ENCODE measurements at regions of chr9 and their contacts with region 1.

Region 1: GRCh38 chr9:72280913-72281500 is 84.0 kb downstream of the ZFAND5 start:
- DNase-seq: peak; percentile 61 to 76 (median 71)
- ATAC-seq: peak; percentile 92
- H3K4me3 ChIP-seq: no peak overlapping the region
- H3K4me1 ChIP-seq: peaks cover 7% of the 10 kb centered on the region
- CTCF ChIP-seq: peak; percentile 89

Region 2: GRCh38 chr9:72038890-72039410 is 242.1 kb before region 1 on chr9:
- intact Hi-C with region 1: loop called in 1 of 2 experiments (anchors 5 kb)
- DNase-seq: peak in 2 of 3 donors; percentile 84 to 86
- ATAC-seq: peak; percentile 96
- H3K4me3 ChIP-seq: no peak overlapping the region
- H3K4me1 ChIP-seq: no peaks in the 10 kb centered on the region
- CTCF ChIP-seq: peak; percentile 89

Region 3: GRCh38 chr9:72586388-72587130 is 305.6 kb after region 1 on chr9:
- intact Hi-C with region 1: loop called in 1 of 2 experiments (anchors 5 kb)
- DNase-seq: peak in 1 of 3 donors; percentile 36
- ATAC-seq: peak; percentile 87
- H3K4me3 ChIP-seq: no peak overlapping the region
- H3K4me1 ChIP-seq: peaks cover 38% of the 10 kb centered on the region
- CTCF ChIP-seq: no peak